ENCODE measurements at regions of chr1 and their contacts with region 1.

Region 1: GRCh38 chr1:233916706-233917105 is 12.2 kb downstream of the SLC35F3 start:
- DNase-seq: peak; percentile 97
- ATAC-seq: peak; percentile 94
- H3K4me3 ChIP-seq: peak overlapping the region; percentile 8; the same call in 1 of the 2 replicates
- H3K27ac ChIP-seq: peak overlapping the region; percentile 88
- H3K4me1 ChIP-seq: peaks cover 31% of the 10 kb centered on the region
- H3K27me3 ChIP-seq: no peaks in the 10 kb centered on the region
- CTCF ChIP-seq: peak; percentile 53; the same call in 1 of the 2 replicates

Region 2: DNA sequence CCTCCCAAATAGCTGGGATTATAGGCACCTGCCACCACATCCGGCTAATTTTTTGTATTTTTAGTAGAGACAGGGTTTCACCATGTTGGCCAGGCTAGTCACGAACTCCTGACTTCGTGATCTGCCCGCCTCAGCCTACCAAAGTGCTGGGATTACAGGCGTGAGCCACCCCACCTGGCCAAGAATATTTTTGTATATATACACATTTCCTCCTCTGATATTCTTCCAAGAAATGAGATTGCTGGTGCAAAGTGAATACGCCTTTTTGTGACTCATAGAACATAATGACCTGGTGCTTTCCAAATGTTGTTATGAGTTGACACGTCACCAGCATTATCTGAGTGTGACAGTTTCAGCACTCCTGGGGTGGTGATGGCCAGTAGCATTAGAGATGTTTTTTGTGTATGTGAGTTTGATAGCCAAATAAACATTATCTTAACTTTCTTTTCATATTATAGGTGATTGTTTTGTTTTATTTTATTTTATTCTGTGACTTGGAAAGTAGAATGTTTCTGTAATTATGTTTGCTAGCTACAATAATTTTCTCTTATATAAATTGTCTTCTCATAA is 247.9 kb before region 1 on chr1:
- CTCF ChIA-PET with region 1: no interaction called
- POLR2A ChIA-PET with region 1: no interaction called
- intact Hi-C with region 1: no loop called
- DNase-seq: peak; percentile 94
- ATAC-seq: peak; percentile 95
- H3K4me3 ChIP-seq: no peak overlapping the region
- H3K27ac ChIP-seq: peak overlapping the region; percentile 51
- H3K4me1 ChIP-seq: peaks cover 13% of the 10 kb centered on the region
- H3K27me3 ChIP-seq: no peaks in the 10 kb centered on the region
- CTCF ChIP-seq: no peak

Region 3: DNA sequence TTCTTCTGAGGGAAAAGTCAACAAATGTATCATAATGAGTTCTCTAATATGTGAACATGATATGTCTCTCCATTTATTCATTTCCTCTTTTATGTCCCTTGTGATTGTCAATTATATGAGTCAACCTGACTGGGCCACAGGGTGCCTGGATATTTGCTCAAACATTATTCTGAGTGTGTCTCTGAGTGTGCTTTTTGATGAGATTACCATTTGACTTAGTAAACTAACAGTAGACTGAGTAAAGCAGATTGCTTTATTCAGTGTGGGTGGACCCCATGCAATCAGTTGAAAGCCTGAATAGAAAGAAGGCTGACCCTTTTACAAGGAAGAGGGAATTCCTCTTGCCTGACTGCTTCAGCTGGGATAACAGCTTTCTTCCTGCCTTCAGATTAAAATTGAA is 130.4 kb after region 1 on chr1:
- CTCF ChIA-PET with region 1: no interaction called
- POLR2A ChIA-PET with region 1: no interaction called
- intact Hi-C with region 1: loop called (anchors 1 kb)
- DNase-seq: peak; percentile 97
- ATAC-seq: peak; percentile 97
- H3K4me3 ChIP-seq: no peak overlapping the region
- H3K27ac ChIP-seq: peak overlapping the region; percentile 97
- H3K4me1 ChIP-seq: peaks cover 33% of the 10 kb centered on the region
- H3K27me3 ChIP-seq: no peaks in the 10 kb centered on the region
- CTCF ChIP-seq: no peak

Measured in PC-3 (cell line).